Motor neuron (in vitro differentiated cells): ENCODE measurements at regions of chr2 and their contacts with region 1.

Region 1: DNA sequence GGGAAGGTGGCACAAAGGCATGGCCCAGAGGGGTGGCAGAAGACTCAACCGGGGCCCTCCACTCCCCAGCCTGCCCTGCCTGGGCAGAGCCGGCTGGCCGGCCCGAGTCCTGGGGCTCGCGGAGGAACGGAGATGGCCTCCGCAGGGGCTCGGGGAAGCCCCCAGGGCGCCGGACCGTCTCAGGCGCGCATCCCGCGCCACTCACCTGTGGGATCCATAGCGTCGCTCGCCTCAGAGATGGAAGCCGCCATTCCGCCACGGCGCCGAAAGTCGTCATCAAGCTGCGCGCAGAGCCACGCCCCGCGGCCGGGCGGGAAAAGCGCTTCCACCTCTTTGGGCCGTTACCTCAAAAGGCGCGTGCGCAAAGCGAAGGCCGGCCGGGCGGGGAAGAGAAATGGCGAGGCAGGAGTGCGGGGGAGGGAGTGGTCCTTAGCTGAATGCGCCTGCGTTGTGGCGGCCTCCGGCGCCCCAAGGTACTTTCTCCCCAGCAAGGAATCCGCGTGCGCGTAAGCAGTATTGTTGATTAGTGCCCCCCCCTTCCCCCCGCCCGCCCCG is at the start of gene SMPD4:
- ATAC-seq: peak; percentile 70 to 81 (median 72)
- H3K4me3 ChIP-seq: peak within 1 kb of the TSS; percentile 64 to 98 (median 83)
- H3K27ac ChIP-seq: peak within 1 kb of the TSS; percentile 86 to 93
- H3K4me1 ChIP-seq: peaks cover 18 to 20% of the 10 kb centered on the region in 2 donors
- total RNA-seq, gene SMPD4: 20.1 to 57.6 (median 29.3) TPM

Region 2: DNA sequence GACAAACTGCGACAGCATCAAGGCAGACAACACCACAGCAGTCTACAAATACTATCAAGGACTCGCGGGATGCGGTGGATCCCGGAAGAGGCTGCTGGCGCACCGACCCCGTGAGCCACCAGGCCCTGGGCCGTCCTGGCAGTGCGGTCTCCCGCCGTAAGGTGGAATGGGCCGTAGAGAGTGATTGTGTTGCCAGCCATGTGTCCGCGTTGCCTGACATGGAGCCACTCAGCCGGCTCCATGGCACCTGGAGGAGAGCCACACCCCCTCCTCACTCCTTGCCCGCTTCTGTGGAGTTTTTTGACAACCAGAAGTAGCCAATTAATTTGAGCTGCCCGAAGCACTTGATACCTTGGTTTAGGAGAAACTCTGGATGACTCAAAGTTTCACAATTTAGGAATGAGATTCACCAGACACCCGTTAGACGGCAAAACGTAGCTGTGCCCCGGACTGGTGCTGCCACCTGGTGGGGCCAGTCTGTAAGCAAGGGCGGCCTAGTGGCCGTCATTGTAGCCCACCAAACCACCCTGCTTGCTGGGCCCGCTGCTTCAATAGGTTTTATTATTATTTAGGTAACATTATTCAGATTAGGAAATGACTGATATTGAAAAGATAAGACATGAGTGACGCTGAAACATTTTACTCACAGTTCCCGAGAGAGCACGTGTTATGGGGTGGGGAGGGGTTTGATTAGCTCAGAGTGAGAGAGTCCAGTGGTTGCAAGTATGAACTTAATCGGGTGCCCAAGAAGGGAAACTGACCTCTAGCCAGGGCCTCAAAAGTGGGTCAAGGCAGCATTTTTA is 151.1 kb after region 1 on chr2:
- in situ Hi-C with region 1: loop called in 4 of 9 experiments (anchors 10 to 25 kb)
- ATAC-seq: peak in 5 of 8 experiments; percentile 26 to 88 (median 69)
- H3K4me3 ChIP-seq: no peak overlapping the region
- H3K27ac ChIP-seq: no peak overlapping the region
- H3K4me1 ChIP-seq: no peaks in the 10 kb centered on the region